Activated T-helper 1 cell treated with anti-CD3 and anti-CD28 coated beads, Interleukin-12 subunit alpha, Interleukin-12 subunit beta, Interleukin-2, Interleukin-4 antibody, amounts not matched to agents 30 ng/mL and 10 ng/mL and 1 ng/mL, durations not matched to agents 14 hours and 24 hours and 36 hours (primary cell): ENCODE measurements at regions of chr2 and their contacts with region 1.

Region 1: GRCh38 chr2:15577071-15577735 is 14.5 kb upstream of the DDX1 start:
- DNase-seq: peak; percentile 74
- H3K4me3 Mint-ChIP-seq: no peak overlapping the region
- H3K27ac Mint-ChIP-seq: no peak overlapping the region
- H3K4me1 Mint-ChIP-seq: no peaks in the 10 kb centered on the region
- H3K27me3 Mint-ChIP-seq: no peaks in the 10 kb centered on the region

Region 2: DNA sequence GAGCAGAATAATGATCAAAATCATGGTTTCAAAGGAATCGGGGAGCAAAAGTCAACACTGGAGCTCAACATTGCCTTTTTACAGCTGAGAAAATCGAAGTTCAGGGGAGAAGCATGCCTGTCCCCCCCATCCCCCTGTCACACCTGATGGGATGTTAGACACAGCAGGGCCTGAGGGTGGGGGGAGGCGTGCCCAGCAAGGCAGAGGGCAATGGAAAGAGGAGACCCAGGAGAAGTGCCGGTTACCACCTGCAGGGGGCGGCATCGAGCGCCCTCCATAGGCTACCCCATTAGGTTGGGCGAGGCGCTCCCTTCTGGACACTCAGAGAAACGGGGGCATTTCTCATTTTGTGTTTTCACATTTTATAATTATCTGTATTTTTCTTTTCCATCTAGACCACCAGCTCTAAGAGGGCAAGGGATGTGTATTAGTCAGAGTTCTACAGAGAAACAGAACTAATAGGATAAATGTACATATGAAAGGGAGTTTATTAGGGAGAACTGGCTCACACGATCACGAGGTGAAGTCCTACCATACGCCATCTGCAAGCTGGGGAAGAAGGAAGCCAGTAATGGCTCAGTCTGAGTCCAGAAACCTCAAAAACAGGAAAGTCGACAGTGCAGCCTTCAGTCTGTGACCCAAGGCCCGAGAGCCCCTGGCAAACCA is 673.4 kb before region 1 on chr2:
- intact Hi-C with region 1: loop called (anchors 1 kb)
- DNase-seq: peak; percentile 40
- H3K4me3 Mint-ChIP-seq: no peak overlapping the region
- H3K27ac Mint-ChIP-seq: no peak overlapping the region
- H3K4me1 Mint-ChIP-seq: no peaks in the 10 kb centered on the region
- H3K27me3 Mint-ChIP-seq: peaks cover 2% of the 10 kb centered on the region

Region 3: GRCh38 chr2:15435474-15435873 is 141.7 kb before region 1 on chr2:
- intact Hi-C with region 1: loop called (anchors 1 kb)
- DNase-seq: no peak
- H3K4me3 Mint-ChIP-seq: no peak overlapping the region
- H3K27ac Mint-ChIP-seq: no peak overlapping the region
- H3K4me1 Mint-ChIP-seq: no peaks in the 10 kb centered on the region
- H3K27me3 Mint-ChIP-seq: no peaks in the 10 kb centered on the region

Region 4: GRCh38 chr2:15527074-15527739 is 50.0 kb before region 1 on chr2:
- intact Hi-C with region 1: no loop called
- DNase-seq: no peak
- H3K4me3 Mint-ChIP-seq: no peak overlapping the region
- H3K27ac Mint-ChIP-seq: no peak overlapping the region
- H3K4me1 Mint-ChIP-seq: peaks cover under 1% of the 10 kb centered on the region
- H3K27me3 Mint-ChIP-seq: no peaks in the 10 kb centered on the region

Region 5: DNA sequence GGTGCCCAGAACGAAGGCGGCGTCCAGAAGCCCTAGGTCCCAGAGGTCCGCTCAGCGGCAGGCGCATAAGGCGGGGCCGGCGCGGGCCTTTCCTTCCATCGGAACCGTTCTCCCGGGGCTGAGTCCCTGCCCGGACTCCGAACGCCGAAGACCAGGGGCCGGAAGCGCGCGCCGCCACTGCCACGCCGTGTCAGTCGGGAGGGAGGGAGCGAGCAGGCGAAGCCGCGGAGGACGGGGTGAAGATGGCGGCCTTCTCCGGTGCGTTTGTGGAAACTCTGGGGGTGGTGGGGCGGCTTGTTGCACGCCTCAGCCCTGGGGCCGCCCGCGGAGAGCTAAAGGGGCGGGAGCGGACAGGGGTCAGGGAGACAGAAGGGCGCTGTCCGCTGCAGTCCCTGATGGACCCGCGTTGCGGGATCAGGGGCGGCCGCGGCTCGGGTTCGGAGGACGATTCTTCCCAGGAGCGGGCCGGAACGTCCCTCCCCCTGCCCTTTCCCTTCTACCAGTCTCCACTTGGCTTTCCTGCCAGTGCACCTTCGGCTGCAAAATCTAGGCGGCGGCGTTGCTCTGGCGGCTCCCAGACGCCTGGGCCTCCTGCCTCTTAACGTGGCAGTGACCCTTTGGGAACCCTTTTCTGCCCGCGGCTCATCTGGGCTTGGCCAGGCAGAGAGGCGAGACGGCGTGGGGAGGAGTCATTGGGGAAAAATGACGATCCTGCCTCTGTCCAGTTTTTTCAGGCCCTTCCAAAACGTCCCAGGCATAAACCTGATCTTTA is 14.7 kb after region 1 on chr2 and contains the start of gene DDX1:
- intact Hi-C with region 1: loop called (anchors 1 kb)
- DNase-seq: peak; percentile 81
- H3K4me3 Mint-ChIP-seq: peak within 1 kb of the TSS; percentile 91
- H3K27ac Mint-ChIP-seq: peak within 1 kb of the TSS; percentile 91
- H3K4me1 Mint-ChIP-seq: peaks cover 30% of the 10 kb centered on the region
- H3K27me3 Mint-ChIP-seq: no peaks in the 10 kb centered on the region
- total RNA-seq, gene DDX1: 104 and 111 TPM in 2 replicates

Region 6: DNA sequence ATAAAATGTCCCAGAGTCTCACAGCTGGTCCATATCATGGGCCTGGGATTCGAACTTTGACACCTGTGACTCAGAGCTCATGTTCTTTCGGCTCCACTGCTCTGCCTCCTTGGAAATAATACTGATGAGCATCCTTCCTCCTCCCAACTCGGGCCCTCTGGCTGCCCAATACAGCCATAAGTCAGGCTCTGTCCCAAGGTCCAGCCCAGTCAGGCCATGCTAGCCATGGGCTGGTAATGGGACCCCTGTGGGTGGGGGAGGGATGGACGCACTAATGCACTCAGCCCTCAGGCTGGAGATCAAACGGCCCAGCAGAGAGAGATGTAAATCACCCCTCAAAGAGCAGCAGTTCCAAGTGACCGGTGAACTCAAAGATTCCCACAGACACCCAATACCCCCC is 75.6 kb after region 1 on chr2:
- intact Hi-C with region 1: no loop called
- DNase-seq: no peak
- H3K4me3 Mint-ChIP-seq: no peak overlapping the region
- H3K27ac Mint-ChIP-seq: no peak overlapping the region
- H3K4me1 Mint-ChIP-seq: no peaks in the 10 kb centered on the region
- H3K27me3 Mint-ChIP-seq: peaks cover 2% of the 10 kb centered on the region